ENCODE measurements at regions of chr11 and their contacts with region 1.

Region 1: GRCh38 chr11:66744485-66745340 is 15.7 kb upstream of the SPTBN2 start:
- DNase-seq: peak; percentile 98
- H3K4me3 Mint-ChIP-seq: peak overlapping the region; percentile 98
- H3K27ac Mint-ChIP-seq: peak overlapping the region; percentile 84
- H3K4me1 Mint-ChIP-seq: peaks cover 15% of the 10 kb centered on the region
- H3K27me3 Mint-ChIP-seq: no peaks in the 10 kb centered on the region

Region 2: GRCh38 chr11:66228521-66228920 is 516.2 kb before region 1 on chr11:
- intact Hi-C with region 1: no loop called
- DNase-seq: no peak
- H3K4me3 Mint-ChIP-seq: no peak overlapping the region
- H3K27ac Mint-ChIP-seq: no peak overlapping the region
- H3K4me1 Mint-ChIP-seq: no peaks in the 10 kb centered on the region
- H3K27me3 Mint-ChIP-seq: no peaks in the 10 kb centered on the region

Region 3: DNA sequence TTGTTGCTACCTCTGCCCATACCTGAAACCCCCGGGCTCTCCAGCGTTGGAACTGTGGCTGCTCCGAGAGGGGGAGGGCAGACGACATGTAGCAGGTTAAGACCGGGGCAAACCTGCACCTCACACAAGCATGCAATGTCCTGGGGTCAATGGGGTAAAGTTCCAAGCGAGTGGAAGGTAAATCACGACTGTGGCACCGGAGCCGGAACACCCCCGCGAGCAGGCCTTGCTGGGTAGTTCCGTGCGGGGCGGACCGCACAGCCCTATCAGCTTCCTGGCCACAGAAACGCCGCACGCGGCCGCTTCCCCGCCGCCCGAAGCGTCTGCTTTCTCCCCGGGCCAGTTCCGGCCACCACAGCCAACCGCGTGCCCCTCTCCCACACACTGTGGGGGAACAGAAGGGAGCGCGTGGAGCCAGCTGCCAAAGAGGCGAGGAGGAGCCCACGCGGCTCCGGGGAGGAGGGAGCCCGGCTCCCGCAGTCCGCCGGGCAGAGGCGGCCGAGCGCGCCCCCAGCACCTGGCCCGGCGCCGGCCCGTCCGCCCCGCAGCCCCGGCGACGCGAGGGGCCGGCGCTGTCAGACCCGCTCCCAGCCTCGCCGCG is 17.3 kb before region 1 on chr11:
- intact Hi-C with region 1: loop called (anchors 1 kb)
- DNase-seq: peak; percentile 76
- H3K4me3 Mint-ChIP-seq: peak overlapping the region; percentile 9
- H3K27ac Mint-ChIP-seq: no peak overlapping the region
- H3K4me1 Mint-ChIP-seq: peaks cover 8% of the 10 kb centered on the region
- H3K27me3 Mint-ChIP-seq: peaks cover 63% of the 10 kb centered on the region

Region 4: DNA sequence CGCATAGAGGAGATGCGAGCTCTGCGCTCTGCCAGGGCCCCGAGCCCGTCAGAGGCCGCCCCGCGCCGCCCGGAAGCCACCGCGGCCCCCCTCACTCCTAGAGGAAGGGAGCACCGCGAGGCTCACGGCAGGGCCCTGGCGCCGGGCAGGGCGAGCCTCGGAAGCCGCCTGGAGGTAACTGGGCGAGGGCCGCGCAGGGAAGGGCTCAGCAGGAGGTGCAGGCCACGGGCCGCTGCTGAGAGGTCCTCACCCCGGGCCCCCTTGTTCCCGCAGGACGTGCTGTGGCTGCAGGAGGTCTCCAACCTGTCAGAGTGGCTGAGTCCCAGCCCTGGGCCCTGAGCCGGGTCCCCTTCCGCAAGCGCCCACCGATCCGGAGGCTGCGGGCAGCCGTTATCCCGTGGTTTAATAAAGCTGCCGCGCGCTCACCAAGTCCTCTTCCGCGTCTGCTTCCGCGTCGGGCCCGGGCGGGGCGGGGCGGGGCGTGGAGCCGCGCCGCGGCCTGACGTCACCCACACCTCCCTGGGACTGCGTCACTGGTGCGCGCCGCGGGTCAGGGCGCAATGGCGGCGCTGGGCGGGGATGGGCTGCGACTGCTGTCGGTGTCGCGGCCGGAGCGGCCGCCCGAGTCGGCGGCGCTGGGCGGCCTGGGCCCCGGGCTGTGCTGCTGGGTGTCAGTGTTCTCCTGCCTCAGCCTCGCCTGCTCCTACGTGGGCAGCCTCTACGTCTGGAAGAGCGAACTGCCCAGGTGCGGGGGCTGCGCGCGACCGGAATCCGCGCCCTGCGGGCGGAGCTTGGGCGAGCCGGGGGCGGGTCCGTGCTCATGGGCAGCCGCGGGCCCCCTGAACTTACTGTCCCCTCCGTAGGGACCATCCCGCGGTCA is 98.4 kb after region 1 on chr11 and contains the start of gene RCE1:
- intact Hi-C with region 1: loop called (anchors 2 kb)
- DNase-seq: peak; percentile 98
- H3K4me3 Mint-ChIP-seq: peak within 1 kb of the TSS; percentile 91
- H3K27ac Mint-ChIP-seq: peak within 1 kb of the TSS; percentile 96
- H3K4me1 Mint-ChIP-seq: peaks cover 42% of the 10 kb centered on the region
- H3K27me3 Mint-ChIP-seq: no peaks in the 10 kb centered on the region
- total RNA-seq, gene RCE1: 28.5 and 32.9 TPM in 2 replicates